ENCODE measurements at regions of chr19 and their contacts with region 1.

Region 1: DNA sequence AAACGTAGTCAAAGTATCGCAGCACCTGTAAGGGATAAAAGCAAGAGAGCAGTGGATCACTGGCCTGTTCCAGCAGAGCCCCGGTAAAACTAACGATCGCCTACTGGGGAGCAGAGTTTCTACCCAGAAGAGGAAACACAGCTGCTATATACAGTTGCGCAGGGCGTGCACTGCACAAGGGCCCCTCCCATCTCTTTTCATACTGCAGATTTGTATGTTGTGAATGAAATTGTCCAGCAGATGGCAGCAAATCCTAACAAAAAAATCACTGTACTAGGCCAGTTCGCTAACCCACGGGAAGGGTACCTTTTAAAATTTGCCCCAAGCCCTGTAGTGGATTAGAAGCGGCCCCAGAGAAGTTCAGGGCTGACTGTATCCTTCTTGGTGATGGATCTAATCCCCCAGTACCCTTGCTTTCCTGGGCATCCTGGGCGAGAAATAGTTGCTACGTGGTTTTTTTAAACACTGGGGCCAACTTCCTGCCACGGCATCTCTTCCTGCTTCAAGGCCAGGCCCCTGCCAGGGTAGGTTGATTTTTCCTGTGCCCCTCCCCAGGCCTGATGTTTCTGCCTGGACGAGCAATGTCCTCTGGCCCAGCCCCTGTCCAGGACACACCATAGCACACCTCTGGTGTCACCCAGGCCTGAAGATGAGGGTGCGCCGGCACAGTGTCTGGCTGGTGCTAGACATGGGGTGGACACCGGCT is 127.0 kb downstream of the IER2 start:
- DNase-seq: peak; percentile 78
- ATAC-seq: peak; percentile 90
- H3K4me3 Mint-ChIP-seq: peak overlapping the region; percentile 40
- H3K27ac Mint-ChIP-seq: peak overlapping the region; percentile 88
- H3K4me1 Mint-ChIP-seq: peaks cover 31% of the 10 kb centered on the region
- H3K27me3 Mint-ChIP-seq: no peaks in the 10 kb centered on the region

Region 2: DNA sequence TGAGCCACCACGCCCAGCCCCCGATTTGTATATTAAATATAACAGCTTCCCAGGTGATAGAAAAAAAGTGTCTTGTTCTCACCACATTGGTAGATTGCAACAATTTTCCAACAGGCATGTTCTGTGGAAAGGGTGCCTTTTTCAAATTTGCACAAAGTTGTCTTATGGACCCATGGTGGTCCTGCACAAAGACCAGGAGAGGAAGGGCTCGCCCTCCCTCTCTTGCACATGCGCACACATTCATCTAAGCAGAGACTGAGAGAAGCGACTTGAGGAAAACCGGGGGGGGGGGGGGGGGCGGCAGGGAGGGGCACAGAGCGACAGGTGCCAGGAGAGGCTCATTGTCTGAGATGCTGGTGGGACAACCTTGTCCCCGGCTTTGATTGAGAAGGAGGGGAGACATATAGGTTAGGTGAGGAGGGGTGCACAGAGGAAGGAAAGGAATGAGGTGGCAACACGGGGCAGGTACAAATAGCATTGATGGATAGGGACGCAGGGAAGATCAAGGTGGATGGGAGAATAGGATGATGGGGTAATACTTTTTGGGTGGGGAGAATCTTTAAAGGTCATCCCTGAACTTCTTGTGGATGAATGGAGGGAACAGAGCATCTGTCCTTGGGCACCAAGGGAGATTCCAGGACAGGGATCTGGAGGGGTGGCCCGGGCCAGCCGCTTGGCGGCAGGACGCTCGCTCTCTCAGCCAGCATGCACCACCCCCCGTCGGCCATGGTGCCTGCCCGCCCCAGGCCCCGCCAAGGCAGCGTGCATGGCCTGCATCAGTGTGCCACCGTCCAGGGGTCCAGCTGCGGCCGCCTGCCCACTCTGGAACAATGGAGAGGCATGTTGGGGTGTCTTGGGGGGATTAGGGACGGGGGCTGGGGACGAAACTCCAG is 51.0 kb before region 1 on chr19:
- CTCF ChIA-PET with region 1: no interaction called
- DNase-seq: no peak
- ATAC-seq: no peak
- H3K4me3 Mint-ChIP-seq: no peak overlapping the region
- H3K27ac Mint-ChIP-seq: no peak overlapping the region
- H3K4me1 Mint-ChIP-seq: peaks cover 2% of the 10 kb centered on the region
- H3K27me3 Mint-ChIP-seq: peaks cover 6% of the 10 kb centered on the region

Region 3: DNA sequence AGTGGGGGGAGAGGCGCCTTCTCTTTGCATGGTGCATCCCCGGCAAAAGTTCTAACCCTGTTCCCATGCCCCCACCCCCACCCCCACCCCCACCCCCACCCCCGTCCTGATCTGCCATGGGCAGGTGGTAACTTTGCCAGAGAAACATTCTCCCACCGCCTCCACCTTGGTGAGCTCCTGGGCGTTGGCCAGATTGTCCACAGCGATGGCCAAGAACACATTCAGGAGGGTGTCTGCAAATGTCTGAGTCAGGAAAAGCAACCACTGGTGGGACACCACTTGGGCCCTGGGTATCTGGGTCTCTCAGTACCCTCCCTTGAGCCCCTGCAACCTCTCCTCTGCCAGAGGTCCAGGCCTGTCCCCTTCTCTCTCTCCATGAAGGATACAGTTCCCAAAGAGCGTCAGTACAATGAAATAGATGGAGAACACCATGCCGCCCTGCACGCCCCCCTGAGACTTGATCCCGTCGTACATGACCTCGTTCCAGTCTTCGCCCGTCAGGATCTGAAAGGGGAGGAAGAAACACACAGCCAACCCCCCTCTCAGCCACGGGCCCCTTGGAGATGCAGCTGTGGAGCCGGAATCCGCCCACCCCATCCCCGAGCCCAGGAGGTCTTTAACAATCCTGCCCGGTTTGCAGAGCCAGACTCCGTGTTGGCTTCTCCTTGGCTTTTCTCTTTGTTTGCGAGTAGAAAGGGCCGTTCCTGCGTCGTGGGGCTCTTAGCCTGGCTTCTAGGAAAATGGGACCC is 26.3 kb after region 1 on chr19:
- CTCF ChIA-PET with region 1: no interaction called
- DNase-seq: no peak
- ATAC-seq: no peak
- H3K4me3 Mint-ChIP-seq: no peak overlapping the region
- H3K27ac Mint-ChIP-seq: no peak overlapping the region
- H3K4me1 Mint-ChIP-seq: no peaks in the 10 kb centered on the region
- H3K27me3 Mint-ChIP-seq: peaks cover 24% of the 10 kb centered on the region

Region 4: GRCh38 chr19:13430790-13431582 is 153.7 kb after region 1 on chr19:
- CTCF ChIA-PET with region 1: interaction called, 23 read pairs
- DNase-seq: peak; percentile 68
- ATAC-seq: no peak
- H3K4me3 Mint-ChIP-seq: no peak overlapping the region
- H3K27ac Mint-ChIP-seq: no peak overlapping the region
- H3K4me1 Mint-ChIP-seq: no peaks in the 10 kb centered on the region
- H3K27me3 Mint-ChIP-seq: peaks cover 3% of the 10 kb centered on the region

Region 5: DNA sequence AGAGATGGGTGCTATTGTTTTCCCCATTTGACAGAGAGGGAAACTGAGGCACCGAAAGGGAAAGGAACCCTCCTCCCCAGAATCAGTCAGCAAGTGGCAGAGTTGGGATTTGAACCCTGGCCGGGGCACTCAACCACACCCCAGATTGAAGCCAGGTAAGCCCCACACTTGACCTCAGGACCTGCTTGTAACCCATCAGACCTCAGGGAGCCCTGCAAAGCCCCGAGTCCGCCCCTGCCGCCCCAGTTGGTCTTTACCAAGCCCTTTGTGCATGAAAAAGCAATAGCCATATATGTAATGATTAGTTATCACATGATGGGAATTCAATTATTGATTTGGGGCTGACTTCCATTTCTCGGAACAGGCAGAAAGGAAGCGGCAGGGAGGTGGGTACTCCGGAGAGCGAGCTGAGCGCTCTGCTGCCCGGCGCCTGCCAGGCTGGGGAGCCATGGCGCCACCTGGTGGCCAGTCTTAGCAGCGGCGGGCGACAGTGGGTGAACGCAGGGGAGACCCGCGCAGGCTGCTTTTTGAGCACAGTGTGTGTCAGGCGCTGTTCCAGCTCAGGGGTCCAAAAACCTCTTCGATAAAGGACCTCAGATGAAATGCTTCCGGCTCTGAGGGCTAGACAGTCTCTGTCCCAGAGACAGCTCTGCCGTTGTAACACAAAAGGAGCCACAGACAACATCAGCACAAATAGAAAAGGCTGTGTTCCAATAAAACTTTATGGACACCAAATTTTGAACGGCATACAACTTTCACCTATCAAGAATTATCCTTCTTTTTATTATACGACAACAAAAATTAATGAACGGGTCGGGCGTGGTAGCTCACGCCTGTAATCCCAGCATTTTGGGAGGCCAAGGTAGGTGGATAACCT is 311.9 kb after region 1 on chr19:
- CTCF ChIA-PET with region 1: interaction called, 91 read pairs
- DNase-seq: peak; percentile 82
- ATAC-seq: peak; percentile 95
- H3K4me3 Mint-ChIP-seq: no peak overlapping the region
- H3K27ac Mint-ChIP-seq: no peak overlapping the region
- H3K4me1 Mint-ChIP-seq: no peaks in the 10 kb centered on the region
- H3K27me3 Mint-ChIP-seq: no peaks in the 10 kb centered on the region

Measured in activated CD8-positive, alpha-beta memory T cell treated with anti-CD3 and anti-CD28 coated beads, Interleukin-2, amount 10 ng/mL, durations not matched to agents 7 days and 5 days (primary cell).